ENCODE measurements at regions of chr9 and their contacts with region 1.

Region 1: GRCh38 chr9:20437476-20437875 is 184.8 kb downstream of the MLLT3 start:
- DNase-seq: no peak
- ATAC-seq: no peak
- H3K4me3 ChIP-seq: no peak overlapping the region
- H3K27ac ChIP-seq: no peak overlapping the region
- H3K4me1 ChIP-seq: no peaks in the 10 kb centered on the region
- H3K27me3 ChIP-seq: peaks cover 25% of the 10 kb centered on the region
- CTCF ChIP-seq: no peak
- POLR2A ChIP-seq: no peak
- RAD21 ChIP-seq: no peak

Region 2: GRCh38 chr9:20384642-20385041 is 52.8 kb before region 1 on chr9:
- CTCF ChIA-PET with region 1: no interaction called
- POLR2A ChIA-PET with region 1: no interaction called
- RAD21 ChIA-PET with region 1: no interaction called
- intact Hi-C with region 1: loop called (anchors 5 kb)
- DNase-seq: no peak
- ATAC-seq: no peak
- H3K4me3 ChIP-seq: no peak overlapping the region
- H3K27ac ChIP-seq: no peak overlapping the region
- H3K4me1 ChIP-seq: no peaks in the 10 kb centered on the region
- H3K27me3 ChIP-seq: peaks cover 16% of the 10 kb centered on the region
- CTCF ChIP-seq: no peak
- POLR2A ChIP-seq: no peak
- RAD21 ChIP-seq: no peak

Region 3: DNA sequence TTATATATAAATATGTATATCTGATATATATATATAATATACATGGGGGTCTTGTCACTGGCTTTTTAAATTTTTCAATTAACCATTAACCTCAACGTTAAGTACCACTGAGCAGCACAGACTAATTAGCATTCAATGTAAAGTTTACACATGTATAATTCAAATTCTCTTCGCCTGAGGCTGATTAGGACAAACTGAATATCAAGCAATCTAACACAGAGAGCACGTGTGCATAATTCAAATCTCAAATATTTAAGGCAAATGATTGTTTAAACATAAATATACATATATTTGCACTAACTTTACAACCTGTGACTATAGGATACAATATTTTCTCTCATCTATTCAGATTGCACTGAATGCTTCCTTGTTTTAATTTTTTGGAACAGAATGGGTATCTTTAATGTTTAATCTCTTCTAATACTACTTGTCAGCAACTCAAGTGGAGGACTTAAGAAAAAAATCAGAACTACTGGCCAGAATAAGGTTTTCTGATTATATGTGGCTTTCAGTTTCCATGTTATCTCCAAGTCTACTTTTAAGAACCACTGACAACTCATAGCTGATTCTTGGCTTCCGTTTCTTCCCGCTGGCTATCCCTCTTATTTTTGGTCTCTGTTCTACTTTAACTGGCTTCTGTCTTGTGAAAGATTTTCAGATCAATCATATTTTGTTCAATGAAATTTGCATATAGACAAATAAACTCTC is 19.9 kb before region 1 on chr9:
- CTCF ChIA-PET with region 1: no interaction called
- POLR2A ChIA-PET with region 1: no interaction called
- RAD21 ChIA-PET with region 1: no interaction called
- intact Hi-C with region 1: no loop called
- DNase-seq: no peak
- ATAC-seq: no peak
- H3K4me3 ChIP-seq: no peak overlapping the region
- H3K27ac ChIP-seq: no peak overlapping the region
- H3K4me1 ChIP-seq: no peaks in the 10 kb centered on the region
- H3K27me3 ChIP-seq: peaks cover 6% of the 10 kb centered on the region; the same call in 1 of the 2 replicates
- CTCF ChIP-seq: no peak
- POLR2A ChIP-seq: no peak
- RAD21 ChIP-seq: no peak

Region 4: DNA sequence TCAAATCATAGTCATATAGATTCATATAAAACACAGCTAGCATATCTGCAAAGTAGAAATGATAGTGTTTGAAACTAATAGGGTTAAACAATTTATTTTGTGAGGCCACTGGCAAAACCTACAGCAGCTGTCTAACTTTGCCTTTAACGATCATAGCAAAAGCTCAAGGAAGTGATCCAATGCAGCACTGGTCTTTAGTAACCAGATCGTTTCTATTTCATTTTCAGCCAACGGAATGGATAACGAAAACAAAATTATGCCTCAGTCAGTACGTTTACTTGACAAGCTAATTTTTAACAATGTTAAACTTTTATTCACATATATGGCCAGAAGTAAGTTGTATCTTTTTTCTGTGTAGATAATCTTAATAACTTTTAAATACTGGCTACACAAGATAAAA is 167.1 kb after region 1 on chr9:
- CTCF ChIA-PET with region 1: no interaction called
- POLR2A ChIA-PET with region 1: no interaction called
- RAD21 ChIA-PET with region 1: no interaction called
- intact Hi-C with region 1: loop called (anchors 10 kb)
- DNase-seq: no peak
- ATAC-seq: no peak
- H3K4me3 ChIP-seq: no peak overlapping the region
- H3K27ac ChIP-seq: no peak overlapping the region
- H3K4me1 ChIP-seq: no peaks in the 10 kb centered on the region
- H3K27me3 ChIP-seq: 0 out of 2 replicates have a peak, but pooled peaks cover 8% of the 10 kb centered on the region
- CTCF ChIP-seq: no peak
- POLR2A ChIP-seq: no peak
- RAD21 ChIP-seq: no peak

Measured in HCT116 (cell line).